ENCODE measurements at regions of chr16 and their contacts with region 1.

Region 1: DNA sequence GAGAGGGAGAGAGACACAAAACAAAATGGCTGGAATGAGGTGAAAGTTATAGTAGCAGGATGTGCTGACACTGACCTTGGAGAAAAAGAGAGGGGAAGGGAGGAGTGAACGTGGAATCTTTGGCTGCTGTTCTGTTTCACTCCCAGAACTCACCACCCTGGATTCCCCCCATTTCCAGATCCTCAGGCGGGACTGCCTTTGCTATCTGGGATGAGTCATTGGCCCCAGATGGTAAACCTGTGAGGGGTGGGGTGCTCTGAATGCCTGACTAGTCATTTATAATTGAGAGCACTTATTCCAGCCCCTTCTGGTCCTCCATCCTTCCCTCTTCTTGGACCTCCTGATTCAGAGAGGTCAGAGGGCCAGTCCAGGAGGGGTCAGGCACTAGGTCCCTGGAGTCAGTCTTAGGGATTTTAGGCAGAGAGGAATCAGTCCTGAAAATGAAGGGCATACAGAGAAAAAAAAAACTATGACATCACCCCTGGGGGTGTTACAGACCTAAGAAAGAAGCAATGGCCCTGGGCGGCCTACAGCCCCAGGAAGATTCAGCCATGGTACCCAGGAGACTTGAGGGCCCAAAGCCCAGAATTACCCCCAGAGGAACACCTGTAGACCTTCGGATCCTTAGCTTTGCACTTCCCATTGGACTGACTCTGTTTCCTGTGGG is 2.2 kb upstream of the ZG16 start:
- DNase-seq: peak in 3 of 5 donors; percentile 33 to 57 (median 50)
- H3K4me3 ChIP-seq: no peak overlapping the region
- H3K27ac ChIP-seq: no peak overlapping the region
- H3K4me1 ChIP-seq: no peaks in the 10 kb centered on the region
- H3K27me3 ChIP-seq: no peaks in the 10 kb centered on the region
- CTCF ChIP-seq: no peak
- EP300 ChIP-seq: no peak
- POLR2A ChIP-seq: no peak

Region 2: DNA sequence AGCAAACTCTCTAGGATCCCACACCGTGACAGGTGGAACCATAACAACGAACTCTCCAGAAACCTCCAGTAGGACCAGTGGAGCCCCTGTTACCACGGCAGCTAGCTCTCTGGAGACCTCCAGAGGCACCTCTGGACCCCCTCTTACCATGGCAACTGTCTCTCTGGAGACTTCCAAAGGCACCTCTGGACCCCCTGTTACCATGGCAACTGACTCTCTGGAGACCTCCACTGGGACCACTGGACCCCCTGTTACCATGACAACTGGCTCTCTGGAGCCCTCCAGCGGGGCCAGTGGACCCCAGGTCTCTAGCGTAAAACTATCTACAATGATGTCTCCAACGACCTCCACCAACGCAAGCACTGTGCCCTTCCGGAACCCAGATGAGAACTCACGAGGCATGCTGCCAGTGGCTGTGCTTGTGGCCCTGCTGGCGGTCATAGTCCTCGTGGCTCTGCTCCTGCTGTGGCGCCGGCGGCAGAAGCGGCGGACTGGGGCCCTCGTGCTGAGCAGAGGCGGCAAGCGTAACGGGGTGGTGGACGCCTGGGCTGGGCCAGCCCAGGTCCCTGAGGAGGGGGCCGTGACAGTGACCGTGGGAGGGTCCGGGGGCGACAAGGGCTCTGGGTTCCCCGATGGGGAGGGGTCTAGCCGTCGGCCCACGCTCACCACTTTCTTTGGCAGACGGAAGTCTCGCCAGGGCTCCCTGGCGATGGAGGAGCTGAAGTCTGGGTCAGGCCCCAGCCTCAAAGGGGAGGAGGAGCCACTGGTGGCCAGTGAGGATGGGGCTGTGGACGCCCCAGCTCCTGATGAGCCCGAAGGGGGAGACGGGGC is 111.6 kb before region 1 on chr16:
- intact Hi-C with region 1: loop called in 1 of 4 experiments (anchors 10 kb)
- DNase-seq: no peak
- H3K4me3 ChIP-seq: no peak overlapping the region
- H3K27ac ChIP-seq: no peak overlapping the region
- H3K4me1 ChIP-seq: peaks cover 5% of the 10 kb centered on the region
- H3K27me3 ChIP-seq: no peaks in the 10 kb centered on the region
- CTCF ChIP-seq: no peak
- EP300 ChIP-seq: no peak
- POLR2A ChIP-seq: no peak

Region 3: GRCh38 chr16:29951625-29952365 is 175.9 kb after region 1 on chr16:
- intact Hi-C with region 1: no loop called
- DNase-seq: peak in 1 of 5 donors; percentile 8
- H3K4me3 ChIP-seq: no peak overlapping the region
- H3K27ac ChIP-seq: no peak overlapping the region
- H3K4me1 ChIP-seq: no peaks in the 10 kb centered on the region
- H3K27me3 ChIP-seq: no peaks in the 10 kb centered on the region
- CTCF ChIP-seq: no peak
- EP300 ChIP-seq: no peak
- POLR2A ChIP-seq: no peak